ENCODE measurements at regions of chr6 and their contacts with region 1.

Region 1: GRCh38 chr6:70955441-70956190 is 1.2 kb downstream of the B3GAT2 start:
- DNase-seq: peak; percentile 91
- ATAC-seq: peak; percentile 84

Region 2: DNA sequence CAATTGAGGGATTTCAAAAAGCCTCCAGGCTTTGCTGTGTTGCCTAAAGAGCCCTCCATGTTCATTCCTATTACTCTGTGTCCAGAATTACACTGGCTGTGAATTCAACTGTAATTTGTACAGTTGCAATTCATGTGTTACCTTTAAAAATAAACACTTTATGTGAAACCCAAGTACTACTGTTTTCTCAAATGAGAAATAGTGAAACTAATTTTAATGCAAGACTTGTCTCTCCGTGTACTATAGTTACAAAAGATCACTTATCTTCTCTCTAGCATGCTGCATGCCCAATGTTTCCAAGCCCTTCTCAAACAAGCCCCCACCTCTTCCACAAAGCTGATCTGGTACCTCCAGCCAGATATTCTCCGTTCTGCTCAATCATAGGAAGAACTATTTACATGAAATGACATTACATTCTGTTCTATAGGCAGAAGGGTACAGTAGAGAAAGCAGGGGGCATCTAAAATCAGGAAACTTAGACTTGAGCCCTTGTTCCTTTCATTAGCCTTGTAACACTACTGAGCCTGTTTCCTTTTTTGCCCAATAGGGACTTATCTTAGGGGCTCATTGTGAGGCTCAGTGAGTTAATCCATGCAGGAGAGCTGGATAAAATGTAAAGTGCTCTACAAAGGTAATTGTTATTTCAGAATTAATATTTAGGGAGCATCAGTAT is 640.4 kb before region 1 on chr6:
- intact Hi-C with region 1: loop called (anchors 5 kb)
- DNase-seq: no peak
- ATAC-seq: no peak

Region 3: DNA sequence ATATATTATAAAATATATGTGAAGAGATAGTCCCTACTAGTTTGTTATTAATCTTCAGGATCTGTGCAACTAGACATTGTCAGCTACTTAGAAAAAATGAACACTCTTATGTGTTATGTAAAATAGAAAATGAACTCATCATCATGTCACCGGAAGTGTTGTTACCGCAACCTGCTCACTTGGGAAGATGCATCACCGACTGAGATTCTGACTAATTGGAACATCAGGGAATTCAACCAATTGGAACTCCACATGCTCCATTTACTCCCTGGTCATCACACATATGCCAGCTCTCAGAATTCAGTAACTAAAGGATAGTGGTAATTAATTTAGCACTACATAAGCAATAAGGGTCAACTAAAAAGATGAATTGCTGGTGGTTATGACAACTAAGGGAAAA is 18.0 kb after region 1 on chr6:
- intact Hi-C with region 1: loop called (anchors 1 kb)
- DNase-seq: no peak
- ATAC-seq: no peak

Region 4: DNA sequence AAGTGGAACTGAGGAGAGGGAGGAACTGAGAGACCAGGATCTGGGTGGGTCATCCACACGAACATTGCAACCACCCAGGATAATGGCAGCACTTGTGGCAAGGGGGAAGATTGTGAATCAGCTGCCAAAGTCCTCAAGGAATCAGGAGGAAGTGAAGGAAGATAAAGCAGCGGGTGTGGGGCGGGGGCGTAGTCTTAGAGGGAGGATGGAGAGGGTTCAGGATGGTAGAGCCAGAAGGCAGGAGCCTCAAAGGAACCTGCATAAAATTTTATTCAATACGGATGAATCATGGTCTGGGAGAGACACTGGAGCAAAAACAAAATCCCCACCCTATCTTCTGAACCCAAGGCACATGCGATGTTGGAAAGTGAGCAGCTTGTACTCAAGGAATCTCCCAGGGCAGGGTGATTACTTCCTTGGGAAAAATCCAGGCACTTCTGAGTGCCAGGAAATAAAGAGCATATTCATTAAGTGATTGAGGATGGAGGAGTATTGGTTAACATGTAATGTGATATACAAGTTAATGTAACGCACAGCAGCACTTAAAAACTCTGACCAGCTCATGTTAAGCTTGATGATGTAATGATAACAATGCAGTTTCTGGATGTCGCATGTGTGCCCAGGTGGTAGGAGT is 83.2 kb after region 1 on chr6:
- intact Hi-C with region 1: no loop called
- DNase-seq: no peak
- ATAC-seq: peak; percentile 36

Measured in sciatic nerve (tissue), 2 donors.